MCF 10A (cell line): ENCODE measurements at regions of chr11 and their contacts with region 1.

Region 1: DNA sequence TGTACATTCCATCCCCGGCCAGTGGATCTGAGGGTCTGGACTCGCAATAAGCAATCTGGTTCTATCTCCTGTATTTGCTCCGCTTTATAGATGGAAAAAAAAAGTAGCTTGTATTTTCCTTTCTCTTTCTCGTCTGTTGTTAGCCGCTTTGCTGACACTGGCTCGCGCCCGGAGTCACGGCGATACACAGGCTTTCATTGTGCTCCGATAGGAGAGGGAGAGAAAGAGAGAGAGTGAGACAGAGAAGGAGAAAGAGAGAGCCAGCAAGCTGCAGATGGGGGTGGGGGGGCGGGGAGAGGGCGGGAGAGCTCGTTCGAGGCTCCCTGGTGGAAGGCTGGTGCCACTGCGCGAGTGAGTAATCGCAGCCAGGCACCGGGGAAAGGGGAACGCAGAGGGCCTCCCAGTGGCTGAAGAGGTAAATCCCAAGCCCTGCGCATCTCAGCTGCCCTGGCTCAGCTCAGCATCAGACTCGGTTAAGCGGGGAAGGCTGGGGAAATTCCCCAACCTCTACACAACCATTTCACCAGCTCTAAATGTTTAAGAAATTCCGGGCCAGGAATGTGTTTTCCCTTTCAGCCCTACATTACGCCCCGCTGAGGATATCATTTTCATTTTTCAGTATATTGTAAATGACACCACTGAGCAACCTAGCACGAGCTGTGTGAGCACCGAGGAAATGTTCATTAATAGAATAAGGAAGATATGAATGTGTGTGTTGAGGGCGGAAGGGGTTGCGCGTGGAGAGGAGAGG is at the start of gene MAML2:
- DNase-seq: peak; percentile 93
- H3K4me3 Mint-ChIP-seq: peak within 1 kb of the TSS; percentile 95
- H3K27ac Mint-ChIP-seq: peak within 1 kb of the TSS; percentile 94
- H3K4me1 Mint-ChIP-seq: peaks cover 35% of the 10 kb centered on the region
- H3K27me3 Mint-ChIP-seq: no peaks in the 10 kb centered on the region
- CTCF ChIP-seq: peak; percentile 97
- total RNA-seq, gene MAML2: 5.3 and 8.6 TPM in 2 replicates

Region 2: GRCh38 chr11:95790123-95790932 is 552.8 kb before region 1 on chr11 and contains the start of gene CEP57:
- CTCF ChIA-PET with region 1: interaction called, 12 read pairs
- POLR2A ChIA-PET with region 1: interaction called, 4 read pairs
- intact Hi-C with region 1: no loop called
- DNase-seq: peak; percentile 99
- H3K4me3 Mint-ChIP-seq: peak within 1 kb of the TSS; percentile 97
- H3K27ac Mint-ChIP-seq: peak within 1 kb of the TSS; percentile 100
- H3K4me1 Mint-ChIP-seq: peaks cover 17% of the 10 kb centered on the region
- H3K27me3 Mint-ChIP-seq: no peaks in the 10 kb centered on the region
- CTCF ChIP-seq: no peak
- total RNA-seq, gene CEP57: 73.7 and 78.8 TPM in 2 replicates

Region 3: DNA sequence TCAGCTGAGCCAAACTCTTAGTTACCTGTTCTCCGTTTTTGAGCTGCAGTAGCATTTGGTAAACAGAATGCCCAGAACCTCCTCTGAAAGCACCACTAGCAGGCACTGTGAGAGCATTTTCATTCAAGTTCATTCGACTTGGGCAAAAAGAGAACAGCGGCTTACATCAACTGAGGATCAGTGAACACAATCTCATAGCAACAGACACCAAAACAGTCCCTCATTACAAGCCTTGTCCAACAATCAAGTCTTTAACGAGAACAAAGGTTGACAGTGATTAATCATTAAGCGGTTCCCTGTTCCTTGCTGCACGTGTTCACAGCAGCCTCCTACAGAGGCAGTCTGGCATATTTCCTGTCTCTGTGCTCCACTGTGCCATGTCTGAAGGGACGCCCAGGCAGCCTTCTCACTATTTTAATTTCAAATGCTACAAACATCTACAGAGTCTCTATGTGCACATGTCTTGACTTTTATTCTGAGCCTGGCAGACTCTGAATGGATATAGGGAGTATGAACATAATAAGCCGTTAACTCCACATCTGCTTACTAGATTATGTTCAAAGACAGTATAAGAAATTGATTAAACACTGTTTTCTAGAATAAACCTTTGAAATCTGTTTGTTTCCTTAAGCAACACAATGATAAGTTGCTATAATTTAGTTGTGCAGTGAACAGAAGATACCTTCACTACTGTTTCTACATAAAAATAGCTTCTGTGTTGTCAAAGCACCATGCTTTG is 330.9 kb before region 1 on chr11:
- CTCF ChIA-PET with region 1: interaction called, 20 read pairs
- POLR2A ChIA-PET with region 1: interaction called, 3 read pairs
- intact Hi-C with region 1: loop called (anchors 1 kb)
- DNase-seq: peak; percentile 50
- H3K4me3 Mint-ChIP-seq: no peak overlapping the region
- H3K27ac Mint-ChIP-seq: no peak overlapping the region
- H3K4me1 Mint-ChIP-seq: no peaks in the 10 kb centered on the region
- H3K27me3 Mint-ChIP-seq: no peaks in the 10 kb centered on the region
- CTCF ChIP-seq: peak; percentile 41

Region 4: GRCh38 chr11:96084610-96085318 is 258.4 kb before region 1 on chr11:
- CTCF ChIA-PET with region 1: interaction called, 10 read pairs
- POLR2A ChIA-PET with region 1: no interaction called
- intact Hi-C with region 1: no loop called
- DNase-seq: no peak
- H3K4me3 Mint-ChIP-seq: no peak overlapping the region
- H3K27ac Mint-ChIP-seq: no peak overlapping the region
- H3K4me1 Mint-ChIP-seq: no peaks in the 10 kb centered on the region
- H3K27me3 Mint-ChIP-seq: no peaks in the 10 kb centered on the region
- CTCF ChIP-seq: no peak

Region 5: DNA sequence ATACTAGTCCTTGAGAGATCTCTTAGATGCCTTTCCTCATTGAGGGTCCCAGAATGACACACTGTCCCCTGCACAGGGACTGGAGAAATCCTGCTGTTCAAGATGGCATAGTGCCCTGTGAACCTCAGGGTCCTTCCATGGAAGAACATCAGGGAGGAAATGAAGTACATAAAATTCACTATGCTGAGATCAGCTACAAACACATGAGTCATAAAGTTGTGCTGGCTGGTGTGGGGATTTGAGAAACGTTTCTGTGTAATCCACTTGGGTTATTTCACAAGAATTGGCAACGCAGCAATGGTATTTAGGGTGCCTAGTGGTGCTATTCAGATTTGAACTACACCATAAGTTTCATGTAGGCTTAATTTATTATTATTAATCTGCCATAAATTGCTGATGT is 174.5 kb before region 1 on chr11:
- CTCF ChIA-PET with region 1: interaction called, 37 read pairs
- POLR2A ChIA-PET with region 1: interaction called, 9 read pairs
- intact Hi-C with region 1: no loop called
- DNase-seq: peak; percentile 94
- H3K4me3 Mint-ChIP-seq: peak overlapping the region; percentile 28
- H3K27ac Mint-ChIP-seq: peak overlapping the region; percentile 63
- H3K4me1 Mint-ChIP-seq: peaks cover 34% of the 10 kb centered on the region
- H3K27me3 Mint-ChIP-seq: no peaks in the 10 kb centered on the region
- CTCF ChIP-seq: no peak

Region 6: GRCh38 chr11:96267496-96268032 is 75.6 kb before region 1 on chr11:
- CTCF ChIA-PET with region 1: interaction called, 19 read pairs
- POLR2A ChIA-PET with region 1: interaction called, 6 read pairs
- intact Hi-C with region 1: loop called (anchors 5 kb)
- DNase-seq: no peak
- H3K4me3 Mint-ChIP-seq: no peak overlapping the region
- H3K27ac Mint-ChIP-seq: peak overlapping the region; percentile 96
- H3K4me1 Mint-ChIP-seq: peaks cover 30% of the 10 kb centered on the region
- H3K27me3 Mint-ChIP-seq: no peaks in the 10 kb centered on the region
- CTCF ChIP-seq: no peak

Region 7: DNA sequence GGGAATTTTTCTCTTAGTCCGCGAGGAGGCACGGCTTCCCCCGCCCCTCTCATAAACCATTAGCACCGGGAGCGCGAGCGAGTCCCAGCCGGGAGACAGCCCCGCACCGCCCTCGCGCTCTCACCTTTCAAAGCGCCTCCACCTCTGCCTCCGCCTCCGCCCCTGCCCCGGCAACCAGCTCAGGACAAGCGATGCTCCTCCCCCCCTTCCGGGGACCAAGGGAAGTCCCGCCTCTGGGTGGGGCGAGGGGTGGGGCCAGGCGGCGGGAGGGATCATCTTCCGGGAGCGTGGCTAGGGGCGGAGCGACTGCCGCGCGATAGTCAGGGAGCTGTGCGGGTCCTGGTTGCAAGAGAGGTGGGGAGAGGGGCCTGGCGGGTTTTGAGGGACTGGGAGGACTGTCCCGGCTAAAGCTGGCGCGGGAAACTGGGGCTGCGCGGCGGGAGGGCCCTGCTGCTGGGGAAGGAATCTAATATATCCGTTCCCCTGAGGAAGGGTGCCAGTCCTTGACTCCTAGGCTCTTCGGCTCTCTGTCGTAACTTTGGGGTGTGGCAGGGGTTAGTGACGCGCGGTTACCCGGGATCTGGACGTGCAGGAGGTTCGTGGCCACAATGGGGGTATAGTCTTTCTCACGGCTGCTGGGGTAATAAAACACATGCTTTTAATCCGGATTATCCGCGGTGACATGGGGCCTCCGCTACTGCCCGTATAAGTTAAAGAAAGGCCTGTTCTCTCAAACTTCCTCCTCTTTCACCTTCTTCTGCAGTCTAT is 46.8 kb after region 1 on chr11 and contains the starts of genes CCDC82 and JRKL:
- CTCF ChIA-PET with region 1: interaction called, 24 read pairs
- POLR2A ChIA-PET with region 1: interaction called, 32 read pairs
- intact Hi-C with region 1: loop called (anchors 1 kb)
- DNase-seq: peak; percentile 98
- H3K4me3 Mint-ChIP-seq: peak within 1 kb of the TSS; percentile 77
- H3K27ac Mint-ChIP-seq: peak within 1 kb of the TSS; percentile 93
- H3K4me1 Mint-ChIP-seq: peaks cover 11% of the 10 kb centered on the region
- H3K27me3 Mint-ChIP-seq: no peaks in the 10 kb centered on the region
- CTCF ChIP-seq: no peak
- total RNA-seq, gene CCDC82: 15.8 and 21.4 TPM in 2 replicates
- total RNA-seq, gene JRKL: 11.5 and 16.3 TPM in 2 replicates